ENCODE measurements at regions of chr3 and their contacts with region 1.

Region 1: DNA sequence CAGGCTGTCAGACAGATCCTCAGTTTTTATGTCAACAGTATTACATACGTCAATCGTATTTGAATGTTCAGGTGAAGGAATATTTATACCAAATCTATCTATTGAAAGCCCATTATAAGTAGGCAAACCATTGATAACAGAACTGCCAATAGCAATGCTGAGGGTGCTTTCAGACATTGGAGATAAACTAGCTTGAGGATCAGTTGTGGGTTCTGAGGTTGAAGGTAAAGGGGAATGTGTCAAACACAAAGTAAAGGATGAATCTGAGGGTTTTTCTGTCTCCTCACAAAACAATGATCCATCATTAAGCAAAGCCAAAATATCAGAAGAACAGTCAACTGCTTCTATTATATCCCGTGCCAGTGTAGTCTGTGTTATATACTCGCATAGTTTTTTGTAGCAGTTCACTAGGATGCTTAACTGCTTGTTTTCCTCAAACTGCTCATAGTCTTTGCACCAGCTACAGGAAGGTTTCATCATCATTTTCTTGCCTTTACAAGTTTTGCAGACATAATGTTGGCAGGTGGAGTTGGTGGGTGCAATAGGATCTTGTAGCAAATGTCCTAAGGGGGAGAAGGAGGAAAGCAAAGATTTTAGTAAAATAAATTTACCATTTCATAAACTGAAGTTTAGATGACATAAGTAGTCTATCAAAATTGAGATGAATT is 43.8 kb downstream of the MSL2 start:
- DNase-seq: no peak
- ATAC-seq: no peak
- H3K4me3 ChIP-seq: no peak overlapping the region
- H3K4me3 Mint-ChIP-seq: no peak overlapping the region
- H3K27ac ChIP-seq: peak overlapping the region in 1 of 2 donors; percentile 32
- H3K27ac Mint-ChIP-seq: no peak overlapping the region
- H3K4me1 ChIP-seq: peaks cover 3 to 4% of the 10 kb centered on the region in 2 donors
- H3K4me1 Mint-ChIP-seq: peaks cover 40% of the 10 kb centered on the region
- H3K27me3 ChIP-seq: no peaks in the 10 kb centered on the region
- H3K27me3 Mint-ChIP-seq: no peaks in the 10 kb centered on the region
- CTCF ChIP-seq: no peak

Region 2: DNA sequence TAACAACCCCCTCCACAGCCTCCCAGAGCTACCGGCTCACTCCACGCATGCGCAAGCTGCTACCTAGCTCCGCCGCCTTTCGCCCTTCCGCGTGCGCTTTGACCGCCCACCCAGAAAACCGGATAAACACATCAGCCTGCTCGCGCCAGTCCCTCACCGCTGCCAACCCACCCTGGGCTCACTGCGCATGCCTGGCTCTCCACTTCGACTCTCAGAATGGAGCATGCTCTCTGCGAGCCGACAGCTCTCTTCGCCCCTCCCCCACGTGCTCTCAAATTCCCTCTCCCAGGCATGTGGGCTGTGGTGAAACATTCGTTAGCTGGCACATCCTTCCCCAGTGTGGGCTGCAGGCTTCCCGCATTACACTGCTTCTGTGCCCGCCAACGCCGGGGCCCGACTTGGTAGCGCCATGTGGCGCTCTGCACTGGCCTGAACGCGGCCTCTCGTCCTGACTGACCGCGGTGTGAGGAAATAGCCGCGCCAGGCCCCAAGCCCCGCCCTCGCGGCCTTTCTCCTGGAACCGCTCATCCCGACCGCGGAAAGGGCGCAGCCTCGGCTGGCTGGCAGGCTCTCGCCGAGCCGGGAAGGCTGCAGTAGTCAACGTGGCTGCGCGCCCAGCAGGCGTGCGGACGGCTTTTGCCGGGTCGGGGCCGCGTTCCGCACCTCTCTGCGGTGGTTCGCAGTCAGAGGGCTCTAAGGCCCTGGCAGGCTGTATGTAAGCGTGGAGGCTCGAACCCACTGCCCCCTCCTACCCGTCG is 44.3 kb after region 1 on chr3:
- CTCF ChIA-PET with region 1: no interaction called
- POLR2A ChIA-PET with region 1: no interaction called
- intact Hi-C with region 1: loop called (anchors 5 kb)
- DNase-seq: peak; percentile 99
- ATAC-seq: peak; percentile 68
- H3K4me3 ChIP-seq: peak overlapping the region; percentile 65 to 95 (median 86)
- H3K4me3 Mint-ChIP-seq: peak overlapping the region; percentile 97
- H3K27ac ChIP-seq: peak overlapping the region; percentile 91 to 99
- H3K27ac Mint-ChIP-seq: peak overlapping the region; percentile 100
- H3K4me1 ChIP-seq: peaks cover 34 to 36% of the 10 kb centered on the region in 2 donors
- H3K4me1 Mint-ChIP-seq: peaks cover 36% of the 10 kb centered on the region
- H3K27me3 ChIP-seq: no peaks in the 10 kb centered on the region
- H3K27me3 Mint-ChIP-seq: no peaks in the 10 kb centered on the region
- CTCF ChIP-seq: no peak

Measured in B cell (primary cell).